ENCODE measurements at regions of chr11 and their contacts with region 1.

Region 1: DNA sequence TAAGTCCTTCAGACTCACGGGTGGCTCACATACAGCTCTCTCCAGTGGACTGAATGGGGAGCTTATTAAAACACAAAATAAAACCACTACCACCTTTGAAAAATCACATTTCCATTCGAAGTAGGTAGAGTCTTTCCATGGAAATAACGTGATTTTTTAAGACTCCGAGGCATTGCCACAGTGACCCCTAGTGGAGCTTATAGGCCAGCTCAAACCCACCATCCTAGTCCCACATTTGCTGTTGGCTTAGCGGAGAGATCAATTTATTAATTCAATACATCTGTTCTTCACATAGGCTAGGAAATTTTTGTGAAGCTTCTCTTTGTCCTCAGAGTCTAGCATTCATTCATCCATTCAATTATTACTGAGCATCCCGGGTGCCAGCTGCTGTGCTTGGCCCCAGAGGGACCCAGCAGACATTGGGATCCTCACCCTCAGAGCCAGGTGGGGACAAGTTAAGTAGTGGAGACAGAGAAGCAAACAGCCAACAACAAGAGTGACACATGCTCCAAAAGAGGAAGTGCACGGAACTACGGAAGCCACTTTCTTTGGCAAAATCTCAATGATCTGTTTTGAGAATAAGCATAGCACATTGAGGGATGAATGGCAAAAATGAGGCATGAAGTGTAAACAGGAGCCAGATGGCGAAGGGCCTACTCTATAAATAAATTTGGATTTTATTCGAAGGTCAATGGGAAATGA is 10.2 kb upstream of the P4HA3 start:
- DNase-seq: peak; percentile 65
- ATAC-seq: no peak
- H3K4me3 ChIP-seq: no peak overlapping the region
- H3K27ac ChIP-seq: no peak overlapping the region
- H3K4me1 ChIP-seq: peaks cover 22% of the 10 kb centered on the region
- H3K27me3 ChIP-seq: no peaks in the 10 kb centered on the region
- CTCF ChIP-seq: peak; percentile 55
- POLR2A ChIP-seq: no peak
- RAD21 ChIP-seq: peak; percentile 60

Region 2: GRCh38 chr11:74138572-74138971 is 183.1 kb before region 1 on chr11:
- CTCF ChIA-PET with region 1: no interaction called
- POLR2A ChIA-PET with region 1: no interaction called
- dilution Hi-C with region 1: no loop called
- in situ Hi-C with region 1: no loop called
- intact Hi-C with region 1: no loop called
- DNase-seq: peak; percentile 99
- ATAC-seq: peak; percentile 84
- H3K4me3 ChIP-seq: no peak overlapping the region
- H3K27ac ChIP-seq: peak overlapping the region; percentile 5; the same call in 1 of the 2 replicates
- H3K4me1 ChIP-seq: peaks cover 32% of the 10 kb centered on the region
- H3K27me3 ChIP-seq: no peaks in the 10 kb centered on the region
- CTCF ChIP-seq: no peak
- POLR2A ChIP-seq: peak; percentile 49; the same call in 1 of the 2 replicates
- RAD21 ChIP-seq: no peak

Region 3: GRCh38 chr11:74269161-74269811 is 52.4 kb before region 1 on chr11:
- CTCF ChIA-PET with region 1: no interaction called
- POLR2A ChIA-PET with region 1: no interaction called
- dilution Hi-C with region 1: no loop called
- in situ Hi-C with region 1: loop called (anchors 10 kb)
- intact Hi-C with region 1: no loop called
- DNase-seq: peak; percentile 90
- ATAC-seq: peak; percentile 84
- H3K4me3 ChIP-seq: no peak overlapping the region
- H3K27ac ChIP-seq: peak overlapping the region; percentile 80; the same call in 1 of the 2 replicates
- H3K4me1 ChIP-seq: peaks cover 12% of the 10 kb centered on the region
- H3K27me3 ChIP-seq: no peaks in the 10 kb centered on the region
- CTCF ChIP-seq: no peak
- POLR2A ChIP-seq: no peak
- RAD21 ChIP-seq: no peak; the same call in 1 of the 2 replicates

Region 4: GRCh38 chr11:74278721-74279161 is 42.9 kb before region 1 on chr11:
- CTCF ChIA-PET with region 1: no interaction called
- POLR2A ChIA-PET with region 1: no interaction called
- dilution Hi-C with region 1: no loop called
- in situ Hi-C with region 1: no loop called
- intact Hi-C with region 1: loop called (anchors 5 kb)
- DNase-seq: peak; percentile 100
- ATAC-seq: peak; percentile 90
- H3K4me3 ChIP-seq: no peak overlapping the region
- H3K27ac ChIP-seq: peak overlapping the region; percentile 99
- H3K4me1 ChIP-seq: peaks cover 36% of the 10 kb centered on the region
- H3K27me3 ChIP-seq: no peaks in the 10 kb centered on the region
- CTCF ChIP-seq: no peak
- POLR2A ChIP-seq: no peak
- RAD21 ChIP-seq: no peak